Adrenal gland (tissue), 19 donors: ENCODE measurements at regions of chr21 and their contacts with region 1.

Region 1: DNA sequence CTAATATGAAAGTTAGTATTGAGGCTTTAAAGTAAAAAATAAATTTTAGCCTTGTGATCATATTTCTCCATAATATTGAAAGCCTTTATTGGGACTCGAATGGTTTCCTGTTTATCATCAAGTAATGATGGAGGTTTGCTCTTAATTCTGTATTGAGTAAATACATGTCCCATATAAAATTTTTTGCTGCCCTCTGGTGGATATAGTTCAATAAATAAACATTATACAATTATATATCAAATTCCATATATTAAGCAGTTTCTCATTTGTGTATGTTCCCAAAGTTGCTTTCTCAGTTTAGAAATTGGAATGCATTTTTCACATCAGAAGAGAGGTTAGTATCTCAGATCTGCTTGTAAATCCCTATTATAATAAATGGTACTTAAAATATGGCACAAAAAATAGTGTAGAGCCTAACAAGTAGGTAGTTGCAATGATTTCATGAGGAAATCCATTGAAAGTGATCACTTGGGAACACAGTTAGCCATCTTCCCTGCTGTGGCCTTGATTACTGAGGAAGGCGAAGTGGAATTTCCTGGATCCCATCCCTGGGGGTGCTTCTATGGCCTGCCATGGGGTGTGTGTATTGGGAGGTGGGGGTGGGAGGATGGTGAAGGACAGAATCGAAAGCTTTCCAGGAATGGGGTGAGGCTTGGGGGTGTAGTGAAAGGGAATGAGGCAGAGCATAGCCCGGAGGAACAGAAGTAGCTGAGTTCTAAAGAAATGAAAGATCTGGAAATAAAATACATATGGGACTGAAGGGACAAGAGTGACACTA is 84.1 kb upstream of the C21orf91 start:
- DNase-seq: no peak
- H3K4me3 ChIP-seq: no peak overlapping the region
- H3K27ac ChIP-seq: no peak overlapping the region
- H3K4me1 ChIP-seq: no peaks in the 10 kb centered on the region
- H3K27me3 ChIP-seq: no peaks in the 10 kb centered on the region
- CTCF ChIP-seq: peak; percentile 15 to 52 (median 33)
- POLR2A ChIP-seq: no peak

Region 2: GRCh38 chr21:17673261-17674010 is 229.8 kb before region 1 on chr21:
- intact Hi-C with region 1: loop called in 1 of 2 experiments (anchors 5 kb)
- DNase-seq: no peak
- H3K4me3 ChIP-seq: no peak overlapping the region
- H3K27ac ChIP-seq: no peak overlapping the region
- H3K4me1 ChIP-seq: no peaks in the 10 kb centered on the region
- H3K27me3 ChIP-seq: no peaks in the 10 kb centered on the region
- CTCF ChIP-seq: no peak
- POLR2A ChIP-seq: no peak

Region 3: DNA sequence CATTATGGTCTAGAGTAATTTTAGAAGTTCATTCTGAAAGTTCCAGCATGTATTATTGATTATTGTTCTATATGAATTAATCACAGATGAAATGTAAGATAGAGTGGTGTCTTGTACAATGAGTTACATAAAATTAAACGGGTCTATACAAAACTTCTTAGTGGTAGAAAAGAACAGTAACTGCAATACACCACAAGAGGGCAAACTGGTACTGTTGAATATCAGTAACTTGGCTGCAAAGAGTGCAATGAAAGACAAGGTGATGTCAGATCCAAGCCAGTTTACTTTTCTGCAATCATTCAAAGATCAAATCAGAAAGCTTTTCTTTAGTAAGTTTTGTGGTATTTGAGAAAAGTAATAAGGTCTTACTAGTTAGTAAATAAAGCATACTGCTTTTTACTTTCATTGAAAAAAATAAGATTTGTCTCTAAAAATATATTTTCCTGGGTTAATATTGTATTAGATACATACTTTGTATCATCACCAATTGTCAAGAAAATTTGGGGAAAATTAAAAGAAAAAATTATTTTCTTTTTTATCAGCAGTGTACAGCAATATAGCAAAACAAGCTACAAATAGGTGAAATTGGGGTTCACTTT is 224.1 kb before region 1 on chr21:
- intact Hi-C with region 1: loop called (anchors 2 to 5 kb)
- DNase-seq: peak in 1 of 7 donors; percentile 14
- H3K4me3 ChIP-seq: no peak overlapping the region
- H3K27ac ChIP-seq: no peak overlapping the region
- H3K4me1 ChIP-seq: no peaks in the 10 kb centered on the region
- H3K27me3 ChIP-seq: no peaks in the 10 kb centered on the region
- CTCF ChIP-seq: peak; percentile 62 to 93 (median 90)
- POLR2A ChIP-seq: no peak